HEK293T (cell line): ENCODE measurements at regions of chrX and their contacts with region 1.

Region 1: GRCh38 chrX:109890895-109891502 is 111.9 kb upstream of the TMEM164 start:
- DNase-seq: peak; percentile 87

Region 2: DNA sequence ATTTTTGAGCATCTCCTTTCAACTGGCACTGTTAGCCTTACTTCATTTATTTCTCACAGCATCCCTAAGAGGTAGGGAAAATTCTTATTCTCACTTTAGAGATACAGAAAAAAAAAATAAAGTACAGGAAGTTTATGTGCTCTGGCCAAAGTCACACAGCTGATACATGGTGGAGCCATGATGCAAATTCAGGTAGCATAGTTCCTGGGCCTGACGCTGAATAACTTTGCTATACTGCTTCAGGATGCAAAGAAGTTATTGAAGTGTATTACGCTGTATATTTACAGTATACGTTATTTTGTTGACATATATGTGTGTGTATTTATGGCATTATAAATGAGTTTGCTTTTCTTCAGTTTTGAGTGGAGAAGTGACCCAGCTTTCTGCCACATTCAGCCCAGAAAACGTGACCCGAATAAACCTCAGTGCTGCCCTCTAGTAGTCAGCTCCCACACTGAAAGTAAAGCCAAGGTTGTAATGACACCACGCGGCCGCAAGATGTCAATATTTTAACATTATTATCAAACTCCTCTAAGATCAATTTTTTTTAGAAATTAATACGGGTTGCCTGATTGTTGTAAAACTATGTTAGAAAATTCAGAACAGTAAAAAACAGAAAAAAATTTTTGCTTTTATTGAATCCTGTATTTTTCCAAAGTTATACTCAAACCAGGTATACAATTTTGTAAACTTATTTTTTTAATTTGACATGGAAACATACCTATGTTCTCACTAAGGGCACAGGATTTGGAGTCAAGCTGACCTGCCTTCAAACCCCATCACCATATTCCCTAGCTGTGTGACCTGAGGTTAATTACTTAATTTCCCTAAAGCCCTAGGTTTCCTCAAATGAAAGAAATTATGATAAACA is 405.3 kb before region 1 on chrX:
- CTCF ChIA-PET with region 1: interaction called, 17 read pairs
- POLR2A ChIA-PET with region 1: no interaction called
- DNase-seq: peak; percentile 76

Region 3: DNA sequence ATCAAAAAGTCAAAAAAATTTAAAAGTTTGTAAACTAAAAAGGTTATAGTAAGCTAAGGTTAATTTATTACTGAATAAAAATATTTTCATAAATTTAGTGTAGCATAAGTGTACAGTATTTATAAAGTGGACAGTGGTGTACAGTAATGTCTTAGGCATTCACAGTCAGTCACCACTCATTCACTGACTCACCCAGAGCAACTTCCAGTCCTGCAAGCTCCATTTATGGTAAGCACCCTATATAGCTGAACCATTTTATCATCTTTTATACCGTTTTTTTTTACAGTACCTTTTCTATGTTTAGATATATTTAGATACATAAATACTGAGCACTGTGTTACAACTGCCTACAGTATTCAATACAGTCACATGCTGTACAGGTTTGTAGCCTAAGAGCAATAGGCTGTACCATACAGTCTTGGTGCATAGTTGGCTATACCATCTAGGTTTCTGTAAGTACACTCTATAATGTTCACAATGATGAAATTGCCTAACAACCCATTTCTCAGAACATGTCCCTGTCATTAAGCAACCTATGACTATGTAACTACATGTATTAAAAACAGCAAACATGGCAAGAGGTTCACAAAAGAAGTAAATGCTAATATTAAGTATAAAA is 176.6 kb before region 1 on chrX:
- CTCF ChIA-PET with region 1: interaction called, 43 read pairs
- POLR2A ChIA-PET with region 1: no interaction called
- DNase-seq: no peak

Region 4: GRCh38 chrX:109862433-109862832 is 28.6 kb before region 1 on chrX:
- CTCF ChIA-PET with region 1: interaction called, 16 read pairs
- POLR2A ChIA-PET with region 1: no interaction called
- DNase-seq: no peak

Region 5: DNA sequence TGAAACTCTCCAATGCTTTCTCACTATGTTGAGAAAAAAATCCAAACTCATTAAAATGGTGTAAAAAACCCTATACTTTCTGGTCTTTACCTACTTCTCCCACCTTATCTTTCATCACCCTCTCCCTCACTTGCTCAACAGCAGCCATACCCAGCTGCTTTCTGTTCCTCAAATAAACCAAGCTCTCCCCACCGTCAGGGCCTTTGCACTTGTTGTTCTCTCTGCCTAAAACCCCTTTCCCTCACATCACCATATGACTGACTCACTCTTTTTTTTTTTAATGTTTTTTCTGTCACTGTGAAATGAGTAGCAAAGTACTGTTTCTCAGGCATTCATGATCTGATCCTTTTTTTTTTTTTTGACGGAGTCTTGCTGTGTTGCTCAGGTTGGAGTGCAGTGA is 10.4 kb before region 1 on chrX:
- CTCF ChIA-PET with region 1: interaction called, 17 read pairs
- POLR2A ChIA-PET with region 1: interaction called, 3 read pairs
- DNase-seq: no peak

Region 6: DNA sequence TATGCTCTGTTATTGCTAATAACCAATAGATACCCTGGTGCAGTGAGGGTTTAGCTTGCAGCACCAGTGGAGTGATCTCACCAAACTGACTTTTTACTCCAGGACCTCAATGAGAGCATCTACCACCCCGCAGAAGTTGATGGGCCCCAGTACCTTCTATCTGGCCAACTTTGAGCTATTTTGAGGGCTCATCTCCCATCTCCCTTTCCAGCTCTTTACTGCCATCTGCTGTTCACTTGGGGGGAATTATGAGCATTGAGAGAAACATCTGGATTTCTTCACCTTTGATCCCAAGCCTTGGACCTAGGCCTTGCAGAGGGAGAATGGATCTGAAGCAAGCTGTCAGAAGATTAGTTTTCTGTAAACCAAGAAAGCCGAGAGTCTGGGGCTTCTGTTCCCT is 255.5 kb after region 1 on chrX:
- CTCF ChIA-PET with region 1: interaction called, 10 read pairs
- POLR2A ChIA-PET with region 1: no interaction called
- DNase-seq: peak; percentile 75